B cell (primary cell): ENCODE measurements at regions of chr4 and their contacts with region 1.

Region 1: DNA sequence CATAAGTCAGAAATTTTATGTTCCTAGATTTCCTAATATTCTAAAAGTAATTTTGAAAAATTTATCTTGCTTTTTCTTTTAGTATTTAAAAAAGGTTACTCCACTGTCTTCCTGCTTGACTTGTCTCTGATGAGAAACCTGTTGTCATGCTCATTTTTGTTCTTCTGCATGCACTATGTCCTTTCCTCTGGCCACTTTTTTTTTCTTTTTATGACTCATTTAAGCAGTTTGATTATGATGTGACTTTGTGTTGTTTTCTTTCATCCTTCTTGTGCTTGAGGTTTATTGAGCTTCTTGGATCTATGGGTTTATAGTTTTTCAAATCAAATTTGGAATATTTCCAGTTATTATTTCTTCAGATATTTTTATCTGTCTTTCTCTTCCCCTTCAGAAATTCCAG is 12.0 kb upstream of the UFSP2 start:
- DNase-seq: no peak
- ATAC-seq: no peak
- H3K4me3 ChIP-seq: no peak overlapping the region
- H3K4me3 Mint-ChIP-seq: no peak overlapping the region
- H3K27ac ChIP-seq: no peak overlapping the region
- H3K27ac Mint-ChIP-seq: no peak overlapping the region
- H3K4me1 ChIP-seq: no peaks in the 10 kb centered on the region
- H3K4me1 Mint-ChIP-seq: no peaks in the 10 kb centered on the region
- H3K27me3 ChIP-seq: peaks cover 0 to 8% (median 4%) of the 10 kb centered on the region in 4 experiments
- H3K27me3 Mint-ChIP-seq: peaks cover 9% of the 10 kb centered on the region
- CTCF ChIP-seq: no peak

Region 2: GRCh38 chr4:185457136-185457535 is 19.3 kb after region 1 on chr4:
- CTCF ChIA-PET with region 1: interaction called, 4 read pairs
- POLR2A ChIA-PET with region 1: no interaction called
- intact Hi-C with region 1: loop called (anchors 2 kb)
- DNase-seq: no peak
- ATAC-seq: no peak
- H3K4me3 ChIP-seq: no peak overlapping the region
- H3K4me3 Mint-ChIP-seq: no peak overlapping the region
- H3K27ac ChIP-seq: no peak overlapping the region
- H3K27ac Mint-ChIP-seq: no peak overlapping the region
- H3K4me1 ChIP-seq: no peaks in the 10 kb centered on the region
- H3K4me1 Mint-ChIP-seq: no peaks in the 10 kb centered on the region
- H3K27me3 ChIP-seq: peaks cover 0 to 9% (median 1%) of the 10 kb centered on the region in 4 experiments
- H3K27me3 Mint-ChIP-seq: peaks cover 21% of the 10 kb centered on the region
- CTCF ChIP-seq: no peak